Body of pancreas (tissue), 4 donors: ENCODE measurements at regions of chr5 and their contacts with region 1.

Region 1: GRCh38 chr5:43389679-43390329 is 22.4 kb downstream of the CCL28 start:
- DNase-seq: peak; percentile 56 to 77 (median 64)
- ATAC-seq: peak; percentile 97
- H3K4me3 ChIP-seq: no peak overlapping the region
- H3K27ac ChIP-seq: no peak overlapping the region
- H3K4me1 ChIP-seq: peaks cover 6% of the 10 kb centered on the region
- H3K27me3 ChIP-seq: no peaks in the 10 kb centered on the region
- CTCF ChIP-seq: peak; percentile 76 to 90 (median 82)
- POLR2A ChIP-seq: no peak

Region 2: GRCh38 chr5:42912184-42912798 is 477.5 kb before region 1 on chr5:
- intact Hi-C with region 1: loop called (anchors 10 kb)
- DNase-seq: no peak
- ATAC-seq: no peak
- H3K4me3 ChIP-seq: no peak overlapping the region
- H3K27ac ChIP-seq: no peak overlapping the region
- H3K4me1 ChIP-seq: peaks cover 10% of the 10 kb centered on the region
- H3K27me3 ChIP-seq: peaks cover 0 to 7% of the 10 kb centered on the region in 2 donors
- CTCF ChIP-seq: peak in 5 of 7 experiments; percentile 9 to 23 (median 17)
- POLR2A ChIP-seq: no peak

Region 3: GRCh38 chr5:43105369-43106289 is 284.2 kb before region 1 on chr5:
- intact Hi-C with region 1: loop called (anchors 10 kb)
- DNase-seq: peak; percentile 88 to 92 (median 90)
- ATAC-seq: peak; percentile 97
- H3K4me3 ChIP-seq: peak overlapping the region in 1 of 2 donors; percentile 12
- H3K27ac ChIP-seq: peak overlapping the region; percentile 17 to 71 (median 53)
- H3K4me1 ChIP-seq: peaks cover 4% of the 10 kb centered on the region
- H3K27me3 ChIP-seq: no peaks in the 10 kb centered on the region
- CTCF ChIP-seq: peak; percentile 97 to 100 (median 100)
- POLR2A ChIP-seq: peak in 2 of 3 donors; percentile 3 to 4